Activated CD4-positive, alpha-beta memory T cell treated with anti-CD3 and anti-CD28 coated beads for 36 hours (primary cell): ENCODE measurements at regions of chr17 and their contacts with region 1.

Region 1: DNA sequence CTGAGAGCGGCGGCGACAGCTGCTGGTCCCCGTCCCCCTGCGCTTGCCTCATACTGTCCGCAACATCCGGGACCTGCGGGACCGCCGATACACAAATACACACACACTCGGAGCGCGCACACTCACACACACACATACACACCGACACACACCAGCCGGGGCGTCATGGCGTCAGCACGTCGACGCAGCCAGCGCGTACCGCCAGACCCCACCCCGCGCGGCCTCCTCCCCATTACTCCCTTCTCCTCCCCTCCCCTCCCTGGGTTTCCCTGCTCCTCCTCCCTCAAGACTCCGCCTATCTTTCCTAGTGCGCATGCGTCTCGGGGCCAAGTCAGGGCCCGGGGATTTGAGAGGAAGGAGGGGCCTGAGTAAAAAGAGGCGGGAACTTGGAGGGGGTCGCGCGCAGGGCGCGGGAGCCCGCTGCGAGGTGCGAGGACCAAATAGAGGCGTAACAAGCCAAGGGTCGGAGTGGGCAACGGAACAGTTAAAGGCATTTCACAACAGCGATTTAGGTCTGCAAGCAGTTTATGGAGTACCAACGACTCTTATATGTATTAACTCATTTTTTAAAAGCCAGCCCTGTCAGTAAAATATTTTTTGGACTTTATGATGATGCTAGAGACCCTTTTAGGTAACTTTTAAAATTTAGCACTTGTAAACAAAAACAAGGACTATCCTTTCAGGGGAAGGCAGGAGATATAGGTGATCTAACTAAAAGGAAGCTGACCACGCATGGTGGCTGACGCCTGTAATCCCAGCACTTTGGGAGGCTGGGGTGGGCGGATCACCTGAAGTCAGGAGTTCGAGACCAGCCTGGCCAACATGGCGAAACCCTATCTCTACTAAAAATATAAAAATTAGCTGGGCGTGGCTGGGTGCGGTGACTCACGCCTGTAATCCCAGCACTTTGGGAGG is at the start of gene SPOP:
- DNase-seq: peak; percentile 100
- H3K4me3 Mint-ChIP-seq: peak within 1 kb of the TSS; percentile 95
- H3K27ac Mint-ChIP-seq: peak within 1 kb of the TSS; percentile 99
- H3K4me1 Mint-ChIP-seq: peaks cover 37% of the 10 kb centered on the region
- H3K27me3 Mint-ChIP-seq: peaks cover 4% of the 10 kb centered on the region
- total RNA-seq, gene SPOP: 53.4 to 60.0 TPM

Region 2: DNA sequence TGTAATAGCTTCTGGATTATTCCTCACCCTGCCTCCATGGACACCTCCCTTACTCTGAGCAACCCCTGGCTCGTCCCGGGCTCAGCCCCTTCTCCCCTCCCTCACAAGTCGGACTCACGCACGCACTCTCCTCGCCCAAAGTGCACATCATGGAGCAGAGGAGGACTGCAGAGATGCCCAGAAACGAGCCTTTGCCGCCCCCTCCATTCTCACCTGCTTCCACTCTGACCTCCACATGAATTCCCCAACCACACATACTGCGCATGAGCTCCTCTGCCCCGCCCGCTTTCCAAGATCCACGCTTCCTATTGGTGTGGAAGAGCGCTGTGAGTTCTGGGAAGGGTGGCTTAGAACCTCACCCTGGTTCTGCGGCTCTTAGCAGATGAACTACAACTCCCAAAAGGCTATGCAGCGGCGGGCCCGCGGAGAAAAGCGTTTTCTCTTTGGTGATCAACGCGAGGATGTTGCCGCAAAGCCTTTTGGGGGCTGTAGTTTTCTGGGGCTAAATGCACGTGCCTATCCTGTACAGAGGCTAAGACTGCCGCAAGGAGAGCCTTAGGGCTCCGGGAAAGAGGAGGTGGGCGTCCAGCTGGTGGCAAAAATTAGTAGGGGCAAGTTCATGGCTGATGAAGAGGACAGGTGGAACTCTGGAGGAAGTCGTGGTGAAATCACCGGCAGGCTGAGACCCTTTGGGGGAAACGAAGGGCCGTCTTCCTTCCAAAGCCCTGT is 263.4 kb before region 1 on chr17 and contains the start of gene PHB1:
- CTCF ChIA-PET with region 1: no interaction called
- POLR2A ChIA-PET with region 1: no interaction called
- intact Hi-C with region 1: loop called (anchors 10 kb)
- DNase-seq: peak; percentile 98
- H3K4me3 Mint-ChIP-seq: peak within 1 kb of the TSS; percentile 97
- H3K27ac Mint-ChIP-seq: peak within 1 kb of the TSS; percentile 76
- H3K4me1 Mint-ChIP-seq: peaks cover 19% of the 10 kb centered on the region
- H3K27me3 Mint-ChIP-seq: no peaks in the 10 kb centered on the region
- total RNA-seq, gene PHB1: 280 to 295 TPM

Region 3: DNA sequence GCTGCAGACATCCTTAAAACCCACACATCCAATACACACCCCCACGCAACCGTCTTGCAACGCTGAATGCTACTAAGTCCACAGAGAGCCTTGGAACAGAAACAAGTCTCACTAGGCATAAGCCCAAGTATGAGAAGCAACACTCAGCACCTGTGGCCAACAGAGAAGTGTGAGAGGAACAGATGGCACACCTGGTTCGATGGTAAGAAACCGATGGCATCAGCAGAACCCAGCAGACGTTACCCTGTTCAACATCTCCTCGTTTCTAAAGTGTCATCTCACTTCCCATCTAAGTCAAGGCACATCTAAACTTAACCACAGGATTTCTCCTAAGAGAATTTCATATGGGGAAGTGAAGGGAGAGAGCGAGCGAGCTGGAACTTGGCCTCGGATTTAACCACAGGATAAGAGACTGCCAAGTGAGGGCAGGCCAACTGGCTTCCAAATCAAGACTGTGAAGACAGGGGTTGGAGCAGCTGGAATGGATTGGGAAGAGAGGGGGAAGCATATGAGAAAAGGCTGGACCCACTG is 61.5 kb before region 1 on chr17:
- CTCF ChIA-PET with region 1: interaction called, 5 read pairs
- POLR2A ChIA-PET with region 1: no interaction called
- intact Hi-C with region 1: loop called (anchors 10 kb)
- DNase-seq: no peak
- H3K4me3 Mint-ChIP-seq: no peak overlapping the region
- H3K27ac Mint-ChIP-seq: peak overlapping the region; percentile 28
- H3K4me1 Mint-ChIP-seq: peaks cover 31% of the 10 kb centered on the region
- H3K27me3 Mint-ChIP-seq: no peaks in the 10 kb centered on the region

Region 4: DNA sequence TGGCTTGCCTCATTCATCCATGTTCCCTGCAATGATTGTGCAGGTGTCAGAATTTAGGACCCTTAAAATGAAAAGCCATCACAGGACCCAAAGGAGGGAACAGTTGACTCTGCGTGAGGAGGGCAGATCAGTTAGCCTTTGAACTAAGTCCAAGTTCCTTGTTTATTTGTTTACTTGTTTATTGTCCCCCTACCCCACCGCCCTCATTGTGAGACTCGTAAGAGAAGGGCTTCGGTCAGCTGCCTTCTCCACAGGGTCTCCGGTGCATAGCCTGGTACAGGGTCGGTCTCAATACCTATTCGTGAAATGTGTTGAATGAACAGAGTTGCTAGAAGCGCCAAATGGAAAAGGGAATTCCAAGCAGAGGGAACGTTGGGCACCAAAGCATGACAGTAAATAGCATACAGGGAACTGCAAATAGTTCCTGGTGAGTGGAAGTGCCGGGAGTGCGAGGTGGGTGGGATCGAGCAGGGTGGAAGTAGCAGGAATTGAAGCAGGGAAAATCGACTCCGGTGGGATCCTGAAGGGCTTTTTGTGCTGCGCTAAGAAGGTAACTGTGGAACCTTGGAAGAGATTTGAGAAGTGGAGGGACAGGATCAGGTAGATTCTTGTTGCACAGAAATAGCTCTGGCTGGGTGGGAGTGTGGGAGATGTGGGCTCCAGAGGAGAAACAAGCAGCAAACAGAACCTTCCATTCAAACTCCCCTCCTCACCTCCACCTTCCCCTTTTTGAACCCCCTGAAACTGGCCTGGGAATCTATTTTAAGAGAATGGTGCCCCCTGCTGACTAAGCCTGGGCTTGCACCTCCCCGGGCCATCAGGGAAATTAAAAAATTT is 16.9 kb after region 1 on chr17:
- CTCF ChIA-PET with region 1: interaction called, 16 read pairs
- POLR2A ChIA-PET with region 1: interaction called, 9 read pairs
- intact Hi-C with region 1: loop called (anchors 2 kb)
- DNase-seq: peak; percentile 84
- H3K4me3 Mint-ChIP-seq: no peak overlapping the region
- H3K27ac Mint-ChIP-seq: peak overlapping the region; percentile 81
- H3K4me1 Mint-ChIP-seq: peaks cover 28% of the 10 kb centered on the region
- H3K27me3 Mint-ChIP-seq: no peaks in the 10 kb centered on the region

Region 5: DNA sequence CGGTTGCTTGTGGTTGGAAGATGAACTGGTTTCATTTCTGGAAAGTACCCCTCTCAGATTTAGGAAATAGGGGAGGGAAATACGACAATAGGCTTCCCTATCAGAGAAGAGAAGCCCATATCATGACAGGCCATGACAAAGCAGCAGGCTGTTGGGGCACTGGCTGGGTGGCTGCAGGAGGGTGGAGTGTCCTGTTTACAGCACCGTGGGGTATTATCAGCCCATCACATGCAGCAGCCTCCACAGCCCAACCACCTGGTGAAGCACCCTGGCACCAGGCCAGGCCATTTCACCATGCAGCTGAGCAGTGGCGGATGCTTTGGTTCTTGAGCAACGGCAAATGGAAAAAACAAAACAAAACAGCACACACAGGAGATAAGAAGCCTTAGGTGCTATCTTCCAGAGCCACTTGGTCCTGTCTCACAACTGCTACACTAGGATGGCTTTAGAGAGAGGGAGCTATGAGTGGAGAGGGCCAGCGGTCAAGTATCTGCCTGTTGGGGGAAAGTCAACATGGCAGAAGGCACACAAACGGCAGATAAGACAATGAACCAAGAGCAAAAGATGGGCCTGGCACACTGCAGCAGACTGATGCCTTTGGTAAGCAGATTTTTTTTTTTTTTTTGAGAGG is 61.6 kb after region 1 on chr17:
- CTCF ChIA-PET with region 1: no interaction called
- POLR2A ChIA-PET with region 1: no interaction called
- intact Hi-C with region 1: loop called (anchors 2 kb)
- DNase-seq: peak; percentile 92
- H3K4me3 Mint-ChIP-seq: peak overlapping the region; percentile 85
- H3K27ac Mint-ChIP-seq: peak overlapping the region; percentile 100
- H3K4me1 Mint-ChIP-seq: peaks cover 74% of the 10 kb centered on the region
- H3K27me3 Mint-ChIP-seq: no peaks in the 10 kb centered on the region

Region 6: GRCh38 chr17:49788478-49789242 is 110.5 kb after region 1 on chr17 and contains the start of gene KAT7:
- CTCF ChIA-PET with region 1: no interaction called
- POLR2A ChIA-PET with region 1: interaction called, 3 read pairs
- intact Hi-C with region 1: loop called (anchors 1 kb)
- DNase-seq: peak; percentile 99
- H3K4me3 Mint-ChIP-seq: peak within 1 kb of the TSS; percentile 91
- H3K27ac Mint-ChIP-seq: peak within 1 kb of the TSS; percentile 95
- H3K4me1 Mint-ChIP-seq: peaks cover 51% of the 10 kb centered on the region
- H3K27me3 Mint-ChIP-seq: no peaks in the 10 kb centered on the region
- total RNA-seq, gene KAT7: 60.5 to 65.8 TPM